Activated CD4-positive, alpha-beta T cell treated with anti-CD3 and anti-CD28 coated beads for 36 hours (primary cell): ENCODE measurements at regions of chr5 and their contacts with region 1.

Region 1: DNA sequence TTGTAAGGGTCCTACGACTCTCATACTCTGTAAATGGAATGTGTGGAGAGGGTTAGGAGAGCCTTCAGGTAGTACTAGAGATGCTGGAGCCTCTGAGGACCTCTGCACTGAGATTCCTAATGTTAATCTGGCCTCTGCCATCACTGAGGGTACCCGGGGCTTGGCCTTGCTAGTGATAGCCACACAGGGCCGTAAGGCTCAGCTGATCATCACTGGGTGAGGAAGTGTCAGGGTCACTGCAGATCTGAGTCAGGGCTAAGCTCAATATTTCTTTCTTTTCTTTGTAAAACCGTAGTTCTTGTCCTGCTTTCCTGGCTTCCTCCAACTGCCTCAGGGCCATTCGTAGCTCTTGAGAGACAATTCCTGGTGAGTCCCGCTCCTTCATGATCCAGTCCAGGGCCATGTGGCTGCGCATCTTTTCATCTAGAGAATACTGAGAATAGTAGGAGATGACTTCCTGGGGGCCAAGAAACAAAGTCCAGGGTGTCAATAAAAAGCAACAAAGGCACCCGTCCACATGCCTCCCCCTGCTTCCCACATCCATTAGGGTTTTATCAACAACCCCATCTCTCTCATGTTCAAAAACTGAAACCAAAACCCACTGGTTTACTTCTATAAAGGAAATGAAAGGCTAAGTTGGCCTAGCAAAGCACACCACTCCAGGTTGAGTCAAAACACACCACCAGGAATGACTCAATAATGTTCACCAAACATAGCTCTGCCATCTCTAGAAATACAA is 47.7 kb downstream of the LIX1 start:
- DNase-seq: peak; percentile 59
- ATAC-seq: peak; percentile 99
- H3K4me3 Mint-ChIP-seq: no peak overlapping the region
- H3K27ac Mint-ChIP-seq: peak overlapping the region; percentile 15
- H3K4me1 Mint-ChIP-seq: peaks cover 16% of the 10 kb centered on the region
- H3K27me3 Mint-ChIP-seq: peaks cover 10% of the 10 kb centered on the region

Region 2: DNA sequence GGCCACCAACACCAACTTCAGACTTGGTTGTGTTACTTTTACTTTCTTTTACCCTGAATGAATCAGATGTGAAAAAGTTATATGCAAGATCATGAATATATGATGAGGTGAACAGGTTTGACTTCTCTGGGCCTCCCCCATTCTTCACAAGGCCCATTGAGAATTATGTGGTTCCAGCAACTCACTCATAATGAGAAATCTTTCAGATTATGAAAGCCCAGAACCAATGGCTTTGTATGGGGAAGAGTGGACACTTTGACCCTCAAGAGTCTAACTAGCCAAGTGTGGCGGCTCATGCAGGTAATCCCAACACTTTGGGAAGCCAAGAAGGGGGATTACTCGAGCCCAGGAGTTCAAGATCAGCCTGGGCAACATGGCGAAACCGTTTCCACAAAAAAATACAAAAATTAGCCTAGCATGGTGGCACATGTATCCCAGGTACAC is 175.0 kb before region 1 on chr5:
- CTCF ChIA-PET with region 1: no interaction called
- POLR2A ChIA-PET with region 1: interaction called, 3 read pairs
- intact Hi-C with region 1: loop called in 1 of 2 experiments (anchors 1 kb)
- DNase-seq: peak; percentile 46
- ATAC-seq: peak; percentile 89
- H3K4me3 Mint-ChIP-seq: no peak overlapping the region
- H3K27ac Mint-ChIP-seq: peak overlapping the region; percentile 51
- H3K4me1 Mint-ChIP-seq: peaks cover 49% of the 10 kb centered on the region
- H3K27me3 Mint-ChIP-seq: no peaks in the 10 kb centered on the region

Region 3: GRCh38 chr5:96957254-96958049 is 137.3 kb before region 1 on chr5:
- CTCF ChIA-PET with region 1: no interaction called
- POLR2A ChIA-PET with region 1: no interaction called
- intact Hi-C with region 1: loop called in 1 of 2 experiments (anchors 1 kb)
- DNase-seq: peak; percentile 73
- ATAC-seq: peak; percentile 93
- H3K4me3 Mint-ChIP-seq: peak overlapping the region; percentile 51
- H3K27ac Mint-ChIP-seq: peak overlapping the region; percentile 84
- H3K4me1 Mint-ChIP-seq: peaks cover 74% of the 10 kb centered on the region
- H3K27me3 Mint-ChIP-seq: no peaks in the 10 kb centered on the region

Region 4: DNA sequence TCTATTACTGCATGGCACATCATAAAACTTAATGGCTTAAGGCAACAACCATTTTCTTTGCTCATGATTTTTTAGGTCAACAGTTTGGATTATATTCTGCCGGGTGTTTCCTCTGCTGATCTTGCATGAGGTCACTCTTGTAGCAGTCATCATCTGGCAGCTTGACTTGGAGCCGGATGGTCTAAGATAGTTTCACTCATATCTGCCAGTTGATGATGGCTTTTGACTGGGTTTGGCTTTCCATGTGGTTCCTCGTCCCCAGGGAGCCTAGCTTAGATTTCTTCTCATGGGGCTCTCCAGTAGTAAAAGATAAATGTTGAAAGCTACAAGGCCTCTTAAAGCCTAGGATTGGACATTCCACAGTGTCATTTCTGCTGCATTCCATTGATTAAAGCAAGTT is 131.5 kb before region 1 on chr5:
- CTCF ChIA-PET with region 1: no interaction called
- POLR2A ChIA-PET with region 1: no interaction called
- intact Hi-C with region 1: loop called in 1 of 2 experiments (anchors 1 kb)
- DNase-seq: peak; percentile 46
- ATAC-seq: peak; percentile 76
- H3K4me3 Mint-ChIP-seq: peak overlapping the region; percentile 64
- H3K27ac Mint-ChIP-seq: peak overlapping the region; percentile 97
- H3K4me1 Mint-ChIP-seq: peaks cover 75% of the 10 kb centered on the region
- H3K27me3 Mint-ChIP-seq: no peaks in the 10 kb centered on the region